ENCODE measurements at regions of chr1 and their contacts with region 1.

Region 1: GRCh38 chr1:21368515-21369289 is 71.2 kb upstream of the NBPF3 start:
- DNase-seq: peak; percentile 77 to 85 (median 80)
- ATAC-seq: peak; percentile 96
- H3K4me3 ChIP-seq: no peak overlapping the region
- H3K4me1 ChIP-seq: peaks cover 8% of the 10 kb centered on the region
- CTCF ChIP-seq: peak; percentile 84

Region 2: GRCh38 chr1:21232044-21232443 is 136.7 kb before region 1 on chr1:
- intact Hi-C with region 1: loop called (anchors 5 to 10 kb)
- DNase-seq: peak in 1 of 3 donors; percentile 77
- ATAC-seq: peak; percentile 90
- H3K4me3 ChIP-seq: no peak overlapping the region
- H3K4me1 ChIP-seq: no peaks in the 10 kb centered on the region
- CTCF ChIP-seq: peak; percentile 16

Region 3: DNA sequence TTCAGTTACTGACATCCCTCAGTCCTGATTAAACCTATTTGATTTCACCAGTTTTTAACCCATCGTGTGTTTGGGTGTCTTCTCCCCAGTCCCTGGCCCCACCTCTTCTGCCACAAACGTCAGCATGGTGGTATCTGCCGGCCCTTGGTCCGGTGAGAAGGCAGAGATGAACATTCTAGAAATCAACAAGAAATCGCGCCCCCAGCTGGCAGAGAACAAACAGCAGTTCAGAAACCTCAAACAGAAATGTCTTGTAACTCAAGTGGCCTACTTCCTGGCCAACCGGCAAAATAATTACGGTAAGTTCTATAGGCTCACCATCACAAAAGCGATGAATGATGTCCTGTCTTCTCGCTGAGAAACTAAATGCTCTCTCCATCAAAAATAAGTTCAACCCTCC is 99.9 kb after region 1 on chr1:
- intact Hi-C with region 1: no loop called
- DNase-seq: peak in 1 of 3 donors; percentile 30
- ATAC-seq: no peak
- H3K4me3 ChIP-seq: no peak overlapping the region
- H3K4me1 ChIP-seq: no peaks in the 10 kb centered on the region
- CTCF ChIP-seq: no peak

Measured in mucosa of descending colon (tissue), 3 donors.